ENCODE measurements at regions of chr13 and their contacts with region 1.

Region 1: GRCh38 chr13:26186118-26186870 is 35.8 kb downstream of the RNF6 start:
- DNase-seq: peak; percentile 91
- H3K4me3 Mint-ChIP-seq: peak overlapping the region; percentile 81
- H3K27ac Mint-ChIP-seq: peak overlapping the region; percentile 83
- H3K4me1 Mint-ChIP-seq: peaks cover 20% of the 10 kb centered on the region
- H3K27me3 Mint-ChIP-seq: no peaks in the 10 kb centered on the region

Region 2: DNA sequence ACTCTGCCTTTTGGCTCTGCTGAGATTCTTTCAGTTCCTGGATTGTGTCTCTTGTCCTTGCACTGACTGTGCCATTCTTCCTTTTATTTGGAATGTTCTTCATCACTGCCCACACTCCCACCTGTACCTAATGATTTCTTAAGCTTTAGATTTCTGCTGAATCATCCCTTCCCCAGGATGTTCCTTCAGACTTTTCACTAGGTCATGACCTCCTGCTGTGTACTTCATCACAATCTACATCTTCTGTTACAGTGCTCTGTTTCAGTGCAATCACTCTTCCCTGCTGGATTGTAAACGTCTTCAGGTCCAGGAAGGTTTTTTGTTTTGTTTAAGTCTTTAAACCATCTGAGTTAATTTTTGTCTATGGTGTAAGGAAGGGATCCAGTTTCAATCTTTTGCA is 533.5 kb before region 1 on chr13:
- CTCF ChIA-PET with region 1: no interaction called
- POLR2A ChIA-PET with region 1: no interaction called
- DNase-seq: no peak
- H3K4me3 Mint-ChIP-seq: no peak overlapping the region
- H3K27ac Mint-ChIP-seq: no peak overlapping the region
- H3K4me1 Mint-ChIP-seq: no peaks in the 10 kb centered on the region
- H3K27me3 Mint-ChIP-seq: peaks cover 10% of the 10 kb centered on the region

Region 3: DNA sequence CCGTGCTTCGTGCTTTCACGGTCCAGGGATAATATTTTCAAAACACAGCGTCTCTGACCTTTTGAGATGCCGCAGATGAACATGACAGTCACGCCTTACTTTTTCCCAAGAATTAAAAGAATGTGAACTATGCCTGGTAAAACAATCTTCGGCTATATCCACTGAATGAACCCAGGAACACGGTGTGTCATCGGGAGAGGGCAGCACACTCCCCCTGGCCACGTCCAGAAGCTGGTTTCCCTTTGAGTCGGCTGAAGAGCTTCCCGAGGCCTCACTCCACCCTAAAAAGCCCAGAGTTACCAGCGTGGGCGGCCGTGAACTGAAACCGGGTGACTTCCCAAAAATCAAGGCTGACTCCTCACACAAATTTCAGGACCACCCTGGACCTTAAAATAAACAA is 111.6 kb before region 1 on chr13:
- CTCF ChIA-PET with region 1: no interaction called
- POLR2A ChIA-PET with region 1: no interaction called
- DNase-seq: no peak
- H3K4me3 Mint-ChIP-seq: no peak overlapping the region
- H3K27ac Mint-ChIP-seq: no peak overlapping the region
- H3K4me1 Mint-ChIP-seq: no peaks in the 10 kb centered on the region
- H3K27me3 Mint-ChIP-seq: peaks cover 26% of the 10 kb centered on the region

Region 4: GRCh38 chr13:26160586-26160985 is 25.7 kb before region 1 on chr13:
- CTCF ChIA-PET with region 1: no interaction called
- POLR2A ChIA-PET with region 1: no interaction called
- DNase-seq: no peak
- H3K4me3 Mint-ChIP-seq: no peak overlapping the region
- H3K27ac Mint-ChIP-seq: no peak overlapping the region
- H3K4me1 Mint-ChIP-seq: no peaks in the 10 kb centered on the region
- H3K27me3 Mint-ChIP-seq: peaks cover 4% of the 10 kb centered on the region

Region 5: GRCh38 chr13:26221721-26222519 is 35.6 kb after region 1 on chr13 and contains the start of gene RNF6:
- CTCF ChIA-PET with region 1: interaction called, 32 read pairs
- POLR2A ChIA-PET with region 1: interaction called, 55 read pairs
- DNase-seq: peak; percentile 90
- H3K4me3 Mint-ChIP-seq: peak within 1 kb of the TSS; percentile 94
- H3K27ac Mint-ChIP-seq: peak within 1 kb of the TSS; percentile 98
- H3K4me1 Mint-ChIP-seq: peaks cover 34% of the 10 kb centered on the region
- H3K27me3 Mint-ChIP-seq: no peaks in the 10 kb centered on the region
- total RNA-seq, gene RNF6: 40.7 to 44.6 TPM

Region 6: GRCh38 chr13:26482451-26483197 is 296.3 kb after region 1 on chr13:
- CTCF ChIA-PET with region 1: interaction called, 30 read pairs
- POLR2A ChIA-PET with region 1: no interaction called
- DNase-seq: peak; percentile 71
- H3K4me3 Mint-ChIP-seq: no peak overlapping the region
- H3K27ac Mint-ChIP-seq: no peak overlapping the region
- H3K4me1 Mint-ChIP-seq: peaks cover 8% of the 10 kb centered on the region
- H3K27me3 Mint-ChIP-seq: no peaks in the 10 kb centered on the region

Region 7: GRCh38 chr13:26628706-26629105 is 442.4 kb after region 1 on chr13:
- CTCF ChIA-PET with region 1: interaction called, 11 read pairs
- POLR2A ChIA-PET with region 1: interaction called, 3 read pairs
- DNase-seq: no peak
- H3K4me3 Mint-ChIP-seq: no peak overlapping the region
- H3K27ac Mint-ChIP-seq: no peak overlapping the region
- H3K4me1 Mint-ChIP-seq: no peaks in the 10 kb centered on the region
- H3K27me3 Mint-ChIP-seq: peaks cover 6% of the 10 kb centered on the region

Measured in activated CD4-positive, alpha-beta memory T cell treated with anti-CD3 and anti-CD28 coated beads, Interleukin-2, amount 10 ng/mL, durations not matched to agents 7 days and 5 days (primary cell).